Activated CD4-positive, alpha-beta memory T cell treated with anti-CD3 and anti-CD28 coated beads for 36 hours (primary cell): ENCODE measurements at regions of chr6 and their contacts with region 1.

Region 1: DNA sequence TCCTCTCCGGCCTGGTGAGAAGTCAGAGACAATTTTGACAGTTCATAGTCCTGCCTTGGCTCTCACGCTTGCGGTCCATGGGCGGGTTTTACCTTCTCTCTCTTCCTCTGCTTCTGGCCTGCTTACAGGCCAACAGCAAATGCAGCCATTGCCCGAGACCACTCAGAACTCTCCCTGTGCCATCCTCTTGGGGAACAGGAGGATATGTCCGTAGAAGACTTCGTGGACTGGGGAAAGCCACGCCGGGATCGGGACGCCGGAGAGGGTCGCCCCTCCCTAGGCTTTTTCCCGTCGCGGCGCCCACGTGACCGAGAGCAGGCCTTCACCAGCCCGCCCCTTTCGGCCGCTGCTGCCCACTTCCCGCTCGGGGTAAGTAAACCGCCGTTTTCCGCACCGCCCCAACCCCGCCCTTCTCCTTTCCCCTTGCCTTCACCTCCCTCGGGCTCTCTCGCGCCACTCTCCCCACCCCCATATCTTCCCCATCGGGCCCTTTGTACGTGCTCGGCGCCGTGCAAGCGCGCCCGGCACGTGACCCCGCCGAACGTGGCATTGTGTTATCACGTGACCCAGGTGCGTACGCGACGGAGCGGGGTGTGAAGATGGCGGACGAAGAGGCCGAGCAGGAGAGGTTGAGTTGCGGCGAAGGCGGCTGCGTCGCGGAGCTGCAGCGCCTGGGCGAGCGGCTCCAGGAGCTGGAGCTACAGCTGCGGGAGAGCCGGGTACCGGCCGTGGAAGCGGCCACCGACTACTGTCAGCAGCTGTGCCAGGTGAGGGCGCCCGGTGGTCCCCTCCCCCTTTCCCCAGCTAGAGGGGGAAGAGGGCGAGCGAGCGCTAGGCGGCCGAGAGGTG is at the start of gene ZNF292:
- DNase-seq: peak; percentile 99
- H3K4me3 Mint-ChIP-seq: peak within 1 kb of the TSS; percentile 88
- H3K27ac Mint-ChIP-seq: peak within 1 kb of the TSS; percentile 97
- H3K4me1 Mint-ChIP-seq: peaks cover 41% of the 10 kb centered on the region
- H3K27me3 Mint-ChIP-seq: peaks cover 1% of the 10 kb centered on the region
- total RNA-seq, gene ZNF292: 51.9 to 52.5 TPM

Region 2: GRCh38 chr6:87066449-87067333 is 88.5 kb before region 1 on chr6:
- CTCF ChIA-PET with region 1: no interaction called
- POLR2A ChIA-PET with region 1: no interaction called
- intact Hi-C with region 1: no loop called
- DNase-seq: peak; percentile 51
- H3K4me3 Mint-ChIP-seq: no peak overlapping the region
- H3K27ac Mint-ChIP-seq: no peak overlapping the region
- H3K4me1 Mint-ChIP-seq: peaks cover 2% of the 10 kb centered on the region
- H3K27me3 Mint-ChIP-seq: peaks cover 2% of the 10 kb centered on the region

Region 3: GRCh38 chr6:87122457-87122856 is 32.8 kb before region 1 on chr6:
- CTCF ChIA-PET with region 1: no interaction called
- POLR2A ChIA-PET with region 1: no interaction called
- intact Hi-C with region 1: no loop called
- DNase-seq: no peak
- H3K4me3 Mint-ChIP-seq: no peak overlapping the region
- H3K27ac Mint-ChIP-seq: no peak overlapping the region
- H3K4me1 Mint-ChIP-seq: no peaks in the 10 kb centered on the region
- H3K27me3 Mint-ChIP-seq: peaks cover 18% of the 10 kb centered on the region

Region 4: DNA sequence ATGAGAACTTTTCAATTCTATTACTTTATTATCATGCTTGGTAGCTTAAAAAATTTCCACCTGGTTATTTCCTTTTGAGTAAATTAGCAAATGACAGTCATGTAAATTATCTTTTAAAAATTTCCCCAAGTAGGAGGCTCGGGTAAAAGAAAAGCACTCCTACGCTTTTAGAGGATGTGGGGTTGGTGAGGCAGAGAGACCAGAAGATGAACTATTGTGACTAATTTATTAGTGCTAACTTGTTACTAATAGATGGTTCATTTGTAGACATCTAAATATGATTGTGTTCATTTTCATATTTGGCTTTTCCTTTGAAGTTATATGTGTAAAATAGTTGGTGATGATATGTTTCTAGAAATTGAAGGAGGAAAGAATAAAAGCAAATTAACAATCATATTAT is 27.1 kb after region 1 on chr6:
- CTCF ChIA-PET with region 1: interaction called, 3 read pairs
- POLR2A ChIA-PET with region 1: interaction called, 3 read pairs
- intact Hi-C with region 1: loop called (anchors 1 kb)
- DNase-seq: peak; percentile 46
- H3K4me3 Mint-ChIP-seq: peak overlapping the region; percentile 37
- H3K27ac Mint-ChIP-seq: peak overlapping the region; percentile 84
- H3K4me1 Mint-ChIP-seq: peaks cover 79% of the 10 kb centered on the region
- H3K27me3 Mint-ChIP-seq: no peaks in the 10 kb centered on the region

Region 5: DNA sequence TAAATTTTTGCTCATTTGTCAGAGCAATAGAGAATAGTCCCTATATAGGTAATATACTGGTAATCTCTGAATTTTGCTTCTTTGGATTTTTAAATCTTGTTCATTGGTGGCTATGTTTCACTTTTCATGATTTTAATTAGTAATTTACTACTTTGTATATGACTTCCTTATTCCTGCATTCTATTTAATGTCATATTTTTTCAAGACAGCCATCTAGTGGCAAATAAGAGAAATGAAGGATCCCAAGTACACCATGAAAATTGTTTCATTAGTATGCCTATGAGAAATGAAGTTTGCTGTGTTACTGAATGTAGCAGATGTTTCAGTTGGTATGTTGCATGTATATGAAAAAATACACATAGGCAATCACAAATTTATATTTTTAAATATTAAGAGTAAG is 82.6 kb after region 1 on chr6:
- CTCF ChIA-PET with region 1: no interaction called
- POLR2A ChIA-PET with region 1: interaction called, 3 read pairs
- intact Hi-C with region 1: loop called (anchors 5 kb)
- DNase-seq: no peak
- H3K4me3 Mint-ChIP-seq: no peak overlapping the region
- H3K27ac Mint-ChIP-seq: no peak overlapping the region
- H3K4me1 Mint-ChIP-seq: peaks cover 8% of the 10 kb centered on the region
- H3K27me3 Mint-ChIP-seq: no peaks in the 10 kb centered on the region

Region 6: DNA sequence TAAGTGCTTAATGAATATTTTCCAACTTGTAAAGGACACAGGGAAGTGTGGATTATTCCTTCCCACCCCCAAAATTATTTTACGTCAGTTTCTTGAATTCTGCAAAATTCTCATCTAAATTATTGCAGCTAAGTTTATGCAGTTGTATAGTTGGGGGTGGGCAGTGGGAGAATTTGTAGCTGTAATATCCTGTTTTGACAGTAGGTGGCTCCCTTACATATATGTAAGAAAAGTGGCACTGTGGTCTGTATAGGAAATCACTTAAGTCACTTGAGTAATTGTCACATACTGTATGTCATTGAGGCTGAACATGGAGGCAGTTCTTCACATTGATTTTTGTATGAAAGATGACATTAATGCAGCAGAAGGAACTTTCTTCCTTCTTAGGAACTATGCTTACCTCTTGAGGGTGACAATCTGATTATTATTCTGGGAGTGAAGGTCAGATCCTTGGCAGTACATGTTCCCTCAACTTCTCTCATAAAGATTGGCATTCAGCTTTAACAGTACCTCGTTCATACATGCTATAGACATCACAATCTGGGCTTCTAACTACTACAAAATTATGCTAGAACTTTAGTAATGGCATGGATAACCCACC is 237.9 kb after region 1 on chr6:
- CTCF ChIA-PET with region 1: no interaction called
- POLR2A ChIA-PET with region 1: no interaction called
- intact Hi-C with region 1: loop called (anchors 5 kb)
- DNase-seq: peak; percentile 49
- H3K4me3 Mint-ChIP-seq: no peak overlapping the region
- H3K27ac Mint-ChIP-seq: no peak overlapping the region
- H3K4me1 Mint-ChIP-seq: no peaks in the 10 kb centered on the region
- H3K27me3 Mint-ChIP-seq: no peaks in the 10 kb centered on the region

Region 7: GRCh38 chr6:87589693-87590549 is 434.7 kb after region 1 on chr6 and contains the starts of genes ORC3 and RARS2:
- CTCF ChIA-PET with region 1: no interaction called
- POLR2A ChIA-PET with region 1: interaction called, 3 read pairs
- intact Hi-C with region 1: loop called (anchors 5 kb)
- DNase-seq: peak; percentile 98
- H3K4me3 Mint-ChIP-seq: peak within 1 kb of the TSS; percentile 85
- H3K27ac Mint-ChIP-seq: peak within 1 kb of the TSS; percentile 79
- H3K4me1 Mint-ChIP-seq: peaks cover 49% of the 10 kb centered on the region
- H3K27me3 Mint-ChIP-seq: no peaks in the 10 kb centered on the region
- total RNA-seq, gene ORC3: 35.0 to 38.7 TPM
- total RNA-seq, gene RARS2: 20.0 to 20.8 TPM

Region 8: GRCh38 chr6:88963139-88964090 is 1808.2 kb after region 1 on chr6 and contains the start of gene RNGTT:
- CTCF ChIA-PET with region 1: no interaction called
- POLR2A ChIA-PET with region 1: no interaction called
- intact Hi-C with region 1: loop called (anchors 10 kb)
- DNase-seq: peak; percentile 99
- H3K4me3 Mint-ChIP-seq: peak within 1 kb of the TSS; percentile 96
- H3K27ac Mint-ChIP-seq: peak within 1 kb of the TSS; percentile 84
- H3K4me1 Mint-ChIP-seq: peaks cover 39% of the 10 kb centered on the region
- H3K27me3 Mint-ChIP-seq: no peaks in the 10 kb centered on the region
- total RNA-seq, gene RNGTT: 21.3 to 22.0 TPM